Astrocyte of the cerebellum (primary cell): ENCODE measurements at regions of chr16 and their contacts with region 1.

Region 1: GRCh38 chr16:75244844-75245758 is 6.3 kb downstream of the BCAR1 start:
- DNase-seq: peak; percentile 93
- H3K4me3 ChIP-seq: no peak overlapping the region
- CTCF ChIP-seq: no peak

Region 2: DNA sequence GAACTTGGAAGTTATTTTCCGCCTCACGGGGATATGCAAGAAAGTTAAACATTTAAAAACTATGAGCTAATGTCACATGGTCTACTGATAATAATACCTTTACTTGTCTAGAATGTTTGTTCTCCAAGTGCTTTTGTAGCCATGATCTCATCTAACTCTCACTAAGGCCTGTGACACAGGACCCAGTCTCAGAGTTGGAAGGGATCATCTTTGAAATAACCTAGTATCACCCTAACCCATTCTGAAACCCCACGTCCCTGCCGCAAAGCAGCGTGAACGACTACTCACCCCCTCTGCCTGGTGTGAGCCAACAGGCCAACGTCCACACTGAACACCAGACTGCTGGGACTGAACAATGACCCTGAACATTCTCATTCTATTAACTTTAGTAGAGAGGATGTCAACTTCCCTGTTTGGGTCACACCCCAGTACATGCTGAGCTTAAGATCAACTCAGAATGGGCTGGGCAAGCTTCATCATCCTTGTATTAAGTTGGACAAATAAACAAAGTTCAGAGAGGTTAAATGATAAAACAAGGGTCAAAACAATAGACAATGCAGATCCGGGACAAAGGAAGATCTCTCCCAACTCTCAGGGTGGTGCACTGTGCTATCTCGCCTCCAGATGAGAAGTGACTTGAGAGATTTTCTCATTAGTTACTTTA is 61.1 kb after region 1 on chr16:
- in situ Hi-C with region 1: no loop called
- DNase-seq: no peak
- H3K4me3 ChIP-seq: no peak overlapping the region
- CTCF ChIP-seq: no peak

Region 3: DNA sequence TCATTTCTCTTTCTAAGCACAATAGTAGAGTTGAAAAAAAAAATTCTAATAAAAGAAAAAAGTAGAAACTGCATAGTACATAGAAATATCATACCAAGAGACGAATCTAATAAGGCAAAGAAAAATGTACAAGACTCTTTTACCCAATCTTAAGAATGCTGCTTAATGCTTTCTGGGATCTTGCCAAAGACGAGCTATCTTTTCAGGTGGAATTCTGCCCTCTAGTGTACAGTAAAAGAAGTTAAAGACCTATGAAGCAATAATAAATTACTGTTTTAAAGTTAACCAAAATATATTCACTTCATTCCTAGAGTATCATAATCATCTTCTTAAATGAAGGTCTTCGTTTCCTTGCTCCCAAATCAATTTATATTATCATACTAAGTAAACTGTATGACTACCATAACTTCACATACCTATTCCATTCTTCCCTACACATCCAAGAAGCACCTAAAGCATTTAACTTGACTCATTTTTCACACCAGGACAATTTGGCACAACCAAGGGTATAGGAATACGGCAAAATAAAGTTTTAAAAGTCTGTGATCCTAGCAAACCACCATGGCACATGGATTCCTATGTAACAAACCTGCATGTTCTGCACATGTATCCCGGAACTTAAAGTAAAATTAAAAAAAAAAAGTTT is 140.5 kb after region 1 on chr16:
- in situ Hi-C with region 1: loop called (anchors 25 kb)
- DNase-seq: peak; percentile 92
- H3K4me3 ChIP-seq: no peak overlapping the region
- CTCF ChIP-seq: no peak